ENCODE measurements at regions of chr1 and their contacts with region 1.

Region 1: GRCh38 chr1:224726441-224727182 is 110.5 kb downstream of the CNIH3 start:
- DNase-seq: peak in 1 of 5 donors; percentile 33
- H3K4me3 ChIP-seq: no peak overlapping the region
- H3K27ac ChIP-seq: no peak overlapping the region
- H3K4me1 ChIP-seq: no peaks in the 10 kb centered on the region
- H3K27me3 ChIP-seq: no peaks in the 10 kb centered on the region
- CTCF ChIP-seq: no peak
- EP300 ChIP-seq: no peak
- POLR2A ChIP-seq: no peak

Region 2: DNA sequence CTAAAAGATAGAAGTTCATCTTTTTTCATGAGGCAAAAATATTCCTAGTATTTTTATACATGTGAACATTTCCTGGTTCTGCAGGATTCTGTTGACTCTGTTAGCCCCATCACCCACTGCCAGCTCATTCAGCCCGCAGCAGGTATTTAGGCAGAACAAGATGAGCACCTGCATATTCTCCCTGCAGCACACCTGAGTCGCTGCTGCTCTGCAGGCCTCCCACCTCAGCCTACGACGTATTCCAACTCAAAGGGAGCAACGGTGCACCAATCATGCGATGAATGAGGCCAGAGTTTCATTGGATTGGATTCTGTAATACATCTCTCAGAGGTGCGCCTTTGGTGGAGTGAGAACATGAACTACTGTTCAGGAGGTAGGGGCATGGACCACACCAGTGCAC is 22.9 kb before region 1 on chr1:
- intact Hi-C with region 1: loop called in 1 of 4 experiments (anchors 2 kb)
- DNase-seq: no peak
- H3K4me3 ChIP-seq: no peak overlapping the region
- H3K27ac ChIP-seq: no peak overlapping the region
- H3K4me1 ChIP-seq: peaks cover 5% of the 10 kb centered on the region
- H3K27me3 ChIP-seq: no peaks in the 10 kb centered on the region
- CTCF ChIP-seq: no peak
- EP300 ChIP-seq: no peak
- POLR2A ChIP-seq: no peak